ENCODE measurements at regions of chr5 and their contacts with region 1.

Region 1: GRCh38 chr5:150217873-150218692 is 28.2 kb downstream of the SLC6A7 start:
- DNase-seq: peak; percentile 51 to 81 (median 70)
- ATAC-seq: peak; percentile 90
- H3K4me3 ChIP-seq: no peak overlapping the region
- H3K4me3 Mint-ChIP-seq: no peak overlapping the region
- H3K27ac ChIP-seq: no peak overlapping the region
- H3K27ac Mint-ChIP-seq: no peak overlapping the region
- H3K4me1 ChIP-seq: no peaks in the 10 kb centered on the region
- H3K4me1 Mint-ChIP-seq: peaks cover 0 to 5% (median 0%) of the 10 kb centered on the region in 7 donors
- H3K27me3 ChIP-seq: peaks cover 0 to 2% of the 10 kb centered on the region in 2 donors
- H3K27me3 Mint-ChIP-seq: peaks cover 0 to 14% (median 2%) of the 10 kb centered on the region in 5 donors

Region 2: GRCh38 chr5:149834246-149834855 is 383.7 kb before region 1 on chr5:
- CTCF ChIA-PET with region 1: no interaction called
- POLR2A ChIA-PET with region 1: no interaction called
- intact Hi-C with region 1: loop called in 1 of 2 experiments (anchors 1 kb)
- DNase-seq: peak in 8 of 9 donors; percentile 29 to 63 (median 42)
- ATAC-seq: peak; percentile 68
- H3K4me3 ChIP-seq: no peak overlapping the region
- H3K4me3 Mint-ChIP-seq: no peak overlapping the region
- H3K27ac ChIP-seq: no peak overlapping the region
- H3K27ac Mint-ChIP-seq: no peak overlapping the region
- H3K4me1 ChIP-seq: no peaks in the 10 kb centered on the region
- H3K4me1 Mint-ChIP-seq: peaks cover 0 to 9% (median 0%) of the 10 kb centered on the region in 7 donors
- H3K27me3 ChIP-seq: no peaks in the 10 kb centered on the region
- H3K27me3 Mint-ChIP-seq: no peaks in the 10 kb centered on the region

Region 3: GRCh38 chr5:150000256-150000989 is 217.7 kb before region 1 on chr5 and contains the starts of genes HMGXB3 and TIGD6:
- CTCF ChIA-PET with region 1: interaction called, 3 read pairs
- POLR2A ChIA-PET with region 1: no interaction called
- intact Hi-C with region 1: loop called in 1 of 2 experiments (anchors 5 kb)
- DNase-seq: peak; percentile 64 to 87 (median 74)
- ATAC-seq: peak; percentile 83
- H3K4me3 ChIP-seq: peak within 1 kb of the TSS; percentile 76
- H3K4me3 Mint-ChIP-seq: peak within 1 kb of the TSS; percentile 86 to 99 (median 93)
- H3K27ac ChIP-seq: peak within 1 kb of the TSS; percentile 80
- H3K27ac Mint-ChIP-seq: peak within 1 kb of the TSS; percentile 75 to 98 (median 94)
- H3K4me1 ChIP-seq: peaks cover 18 to 23% of the 10 kb centered on the region in 2 donors
- H3K4me1 Mint-ChIP-seq: peaks cover 33 to 55% (median 46%) of the 10 kb centered on the region in 7 donors
- H3K27me3 ChIP-seq: no peaks in the 10 kb centered on the region
- H3K27me3 Mint-ChIP-seq: no peaks in the 10 kb centered on the region
- total RNA-seq, gene HMGXB3: 27.2 to 40.6 (median 34.5) TPM
- total RNA-seq, gene TIGD6: 2.3 to 7.4 (median 2.8) TPM

Region 4: DNA sequence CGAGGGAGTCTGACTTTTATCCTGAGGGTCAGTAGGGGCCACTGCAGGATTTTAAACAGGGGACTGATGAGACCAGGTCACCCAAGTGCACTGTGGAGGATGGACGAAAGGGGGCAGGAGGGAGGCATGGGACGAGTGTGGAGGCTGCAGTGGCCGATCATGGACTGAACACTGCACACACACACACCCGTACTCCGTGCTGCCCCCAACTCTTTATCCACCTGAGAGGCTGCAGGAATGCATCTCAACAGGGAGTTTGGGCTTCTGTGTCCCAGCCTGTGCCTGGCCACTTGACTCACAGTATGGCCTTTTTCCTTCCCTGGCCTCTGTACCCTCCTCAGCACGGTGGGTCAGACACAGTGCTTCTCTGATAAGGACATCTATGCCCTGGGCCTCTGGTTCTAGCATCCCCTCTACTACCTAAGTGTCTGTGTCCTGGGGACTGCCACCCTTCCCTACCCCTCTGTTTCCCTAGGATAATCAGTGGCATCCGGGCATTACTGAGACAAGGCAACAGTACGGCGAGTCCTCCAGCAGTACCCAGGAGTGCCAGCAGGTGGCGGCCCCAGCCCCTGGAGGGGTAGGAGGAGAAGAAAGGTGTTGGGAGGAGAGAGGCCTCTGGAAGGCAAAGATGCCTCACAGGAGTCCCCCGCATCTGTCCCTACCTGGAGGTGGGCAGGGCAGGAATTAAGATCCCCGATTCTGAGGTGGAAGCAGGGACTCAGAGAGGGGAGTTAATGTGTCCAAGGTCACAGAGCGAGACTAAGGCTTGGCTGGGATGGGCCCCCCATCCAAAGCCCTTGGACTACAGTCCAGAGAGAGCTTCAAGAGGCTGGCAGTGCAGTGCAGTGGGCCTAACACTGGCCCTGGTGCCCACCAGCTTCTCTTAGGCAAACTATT is 56.6 kb before region 1 on chr5:
- CTCF ChIA-PET with region 1: interaction called, 3 read pairs
- POLR2A ChIA-PET with region 1: no interaction called
- intact Hi-C with region 1: loop called (anchors 1 kb)
- DNase-seq: peak; percentile 35 to 80 (median 60)
- ATAC-seq: peak; percentile 82
- H3K4me3 ChIP-seq: no peak overlapping the region
- H3K4me3 Mint-ChIP-seq: no peak overlapping the region
- H3K27ac ChIP-seq: no peak overlapping the region
- H3K27ac Mint-ChIP-seq: peak overlapping the region in 1 of 9 donors; percentile 16
- H3K4me1 ChIP-seq: no peaks in the 10 kb centered on the region
- H3K4me1 Mint-ChIP-seq: peaks cover 0 to 4% (median under 1%) of the 10 kb centered on the region in 7 donors
- H3K27me3 ChIP-seq: no peaks in the 10 kb centered on the region
- H3K27me3 Mint-ChIP-seq: peaks cover 19 to 32% (median 30%) of the 10 kb centered on the region in 5 donors

Region 5: GRCh38 chr5:150436141-150436680 is 218.1 kb after region 1 on chr5:
- CTCF ChIA-PET with region 1: no interaction called
- POLR2A ChIA-PET with region 1: no interaction called
- intact Hi-C with region 1: loop called (anchors 1 kb)
- DNase-seq: peak; percentile 74 to 89 (median 86)
- ATAC-seq: peak; percentile 99
- H3K4me3 ChIP-seq: no peak overlapping the region
- H3K4me3 Mint-ChIP-seq: peak overlapping the region in 6 of 10 donors; percentile 29 to 61 (median 56)
- H3K27ac ChIP-seq: peak overlapping the region; percentile 12
- H3K27ac Mint-ChIP-seq: peak overlapping the region; percentile 53 to 94 (median 72)
- H3K4me1 ChIP-seq: peaks cover 0 to 7% of the 10 kb centered on the region in 2 donors
- H3K4me1 Mint-ChIP-seq: peaks cover 6 to 11% (median 7%) of the 10 kb centered on the region in 7 donors
- H3K27me3 ChIP-seq: no peaks in the 10 kb centered on the region
- H3K27me3 Mint-ChIP-seq: no peaks in the 10 kb centered on the region